ENCODE measurements at regions of chr5 and their contacts with region 1.

Region 1: GRCh38 chr5:1385395-1386273 is 40.7 kb upstream of the CLPTM1L start:
- DNase-seq: peak; percentile 75 to 82 (median 76)
- H3K4me3 ChIP-seq: peak overlapping the region; percentile 69 to 70
- H3K4me3 Mint-ChIP-seq: peak overlapping the region; percentile 98 to 100 (median 99)
- H3K27ac ChIP-seq: peak overlapping the region; percentile 83
- H3K27ac Mint-ChIP-seq: peak overlapping the region; percentile 94 to 100 (median 100)
- H3K4me1 ChIP-seq: peaks cover 25% of the 10 kb centered on the region
- H3K4me1 Mint-ChIP-seq: peaks cover 20 to 39% (median 27%) of the 10 kb centered on the region in 4 donors
- H3K27me3 ChIP-seq: no peaks in the 10 kb centered on the region
- H3K27me3 Mint-ChIP-seq: no peaks in the 10 kb centered on the region

Region 2: GRCh38 chr5:1294835-1295649 is 90.6 kb before region 1 on chr5 and contains the start of gene TERT:
- CTCF ChIA-PET with region 1: no interaction called
- POLR2A ChIA-PET with region 1: interaction called, 10 read pairs
- intact Hi-C with region 1: no loop called
- DNase-seq: peak; percentile 58 to 67 (median 62)
- H3K4me3 ChIP-seq: peak within 1 kb of the TSS in 1 of 2 donors; percentile 45
- H3K4me3 Mint-ChIP-seq: peak within 1 kb of the TSS in 5 of 8 donors; percentile 33 to 66 (median 49)
- H3K27ac ChIP-seq: no peak within 1 kb of the TSS
- H3K27ac Mint-ChIP-seq: no peak within 1 kb of the TSS
- H3K4me1 ChIP-seq: peaks cover 11% of the 10 kb centered on the region
- H3K4me1 Mint-ChIP-seq: peaks cover 0 to 6% (median 0%) of the 10 kb centered on the region in 4 donors
- H3K27me3 ChIP-seq: no peaks in the 10 kb centered on the region
- H3K27me3 Mint-ChIP-seq: no peaks in the 10 kb centered on the region
- total RNA-seq, gene TERT: not detected

Region 3: DNA sequence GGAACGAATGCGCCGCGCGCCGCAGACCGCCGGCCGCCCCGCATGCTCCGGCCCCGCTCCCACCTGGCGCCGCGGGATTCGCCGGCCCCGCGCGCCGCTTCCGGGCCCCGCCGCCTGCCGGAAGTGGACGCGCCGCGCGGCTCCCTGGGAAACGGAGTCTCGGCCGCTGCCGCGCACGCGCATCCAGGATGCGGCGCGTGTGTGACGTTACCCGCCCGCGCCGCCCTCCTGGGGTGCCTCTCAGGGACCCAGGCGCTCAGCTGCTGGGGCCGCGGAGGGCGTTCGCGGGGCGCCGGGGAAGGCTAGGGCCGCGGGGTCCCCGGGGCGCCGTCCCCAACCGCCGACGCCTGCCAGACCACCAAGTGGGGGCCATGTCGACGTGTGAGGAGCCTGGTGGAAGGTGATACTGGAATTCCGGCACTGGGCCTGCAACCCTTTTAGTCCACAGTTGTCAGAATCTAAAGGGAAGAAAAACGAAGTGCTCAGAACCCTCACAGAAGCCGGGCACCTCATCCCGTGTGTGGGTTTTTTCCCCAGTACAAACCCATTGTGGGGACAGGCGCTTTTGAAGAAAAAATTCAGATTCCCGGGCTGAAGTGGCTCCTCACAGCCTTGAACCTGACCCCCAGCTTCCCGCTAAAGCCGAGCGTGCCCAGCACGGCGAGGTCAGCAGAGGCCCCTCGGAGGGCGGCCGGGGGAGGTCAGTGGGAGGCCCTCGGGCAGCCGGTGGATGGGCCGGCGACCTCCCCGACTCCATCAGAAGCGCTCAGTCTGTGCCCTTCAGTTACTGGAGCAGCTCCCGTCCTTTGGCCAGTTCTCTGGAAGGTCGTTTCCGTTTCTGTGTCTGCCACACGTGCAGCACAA is 40.4 kb before region 1 on chr5 and contains the start of gene CLPTM1L:
- CTCF ChIA-PET with region 1: interaction called, 3 read pairs
- POLR2A ChIA-PET with region 1: interaction called, 53 read pairs
- intact Hi-C with region 1: loop called (anchors 1 kb)
- DNase-seq: peak; percentile 83 to 91 (median 90)
- H3K4me3 ChIP-seq: peak within 1 kb of the TSS; percentile 86 to 96
- H3K4me3 Mint-ChIP-seq: peak within 1 kb of the TSS; percentile 88 to 95 (median 92)
- H3K27ac ChIP-seq: peak within 1 kb of the TSS; percentile 75
- H3K27ac Mint-ChIP-seq: peak within 1 kb of the TSS; percentile 82 to 98 (median 88)
- H3K4me1 ChIP-seq: peaks cover 25% of the 10 kb centered on the region
- H3K4me1 Mint-ChIP-seq: peaks cover 18 to 48% (median 35%) of the 10 kb centered on the region in 4 donors
- H3K27me3 ChIP-seq: no peaks in the 10 kb centered on the region
- H3K27me3 Mint-ChIP-seq: no peaks in the 10 kb centered on the region
- total RNA-seq, gene CLPTM1L: 86.0 to 87.4 TPM

Region 4: GRCh38 chr5:1400211-1400855 is 14.7 kb after region 1 on chr5:
- CTCF ChIA-PET with region 1: no interaction called
- POLR2A ChIA-PET with region 1: interaction called, 12 read pairs
- intact Hi-C with region 1: no loop called
- DNase-seq: no peak
- H3K4me3 ChIP-seq: no peak overlapping the region
- H3K4me3 Mint-ChIP-seq: no peak overlapping the region
- H3K27ac ChIP-seq: no peak overlapping the region
- H3K27ac Mint-ChIP-seq: no peak overlapping the region
- H3K4me1 ChIP-seq: no peaks in the 10 kb centered on the region
- H3K4me1 Mint-ChIP-seq: no peaks in the 10 kb centered on the region
- H3K27me3 ChIP-seq: no peaks in the 10 kb centered on the region
- H3K27me3 Mint-ChIP-seq: peaks cover 9 to 20% of the 10 kb centered on the region in 2 donors

Region 5: DNA sequence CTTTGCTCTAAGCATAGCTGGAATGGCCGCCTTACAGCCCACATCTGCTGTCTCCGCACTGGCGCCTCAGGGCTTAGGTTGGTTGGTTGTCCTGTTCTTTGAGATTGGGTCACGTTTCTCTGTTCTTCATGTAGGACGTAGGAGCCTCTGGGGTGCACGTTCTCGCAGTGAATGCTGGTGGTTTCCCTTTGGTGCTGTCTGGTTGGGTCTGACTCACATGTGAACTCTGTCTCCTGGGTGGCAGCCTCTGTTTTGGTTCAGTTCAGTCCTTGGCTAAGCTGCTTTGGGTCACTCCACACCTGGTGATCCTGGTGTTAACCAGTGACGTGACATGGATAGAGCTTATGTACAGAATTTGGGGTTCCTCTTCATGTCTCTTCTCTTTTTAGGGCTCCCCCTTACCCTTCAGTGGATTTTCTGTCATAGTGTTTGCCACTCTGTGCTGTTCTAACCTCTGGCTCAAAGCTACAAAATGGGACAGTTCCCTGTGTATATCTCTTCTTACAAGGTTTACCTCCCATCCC is 150.8 kb after region 1 on chr5:
- CTCF ChIA-PET with region 1: no interaction called
- POLR2A ChIA-PET with region 1: interaction called, 18 read pairs
- intact Hi-C with region 1: loop called (anchors 5 kb)
- DNase-seq: peak; percentile 67 to 89 (median 71)
- H3K4me3 ChIP-seq: peak overlapping the region; percentile 26 to 30
- H3K4me3 Mint-ChIP-seq: peak overlapping the region; percentile 77 to 90 (median 84)
- H3K27ac ChIP-seq: peak overlapping the region; percentile 72
- H3K27ac Mint-ChIP-seq: peak overlapping the region; percentile 88 to 98 (median 92)
- H3K4me1 ChIP-seq: peaks cover 26% of the 10 kb centered on the region
- H3K4me1 Mint-ChIP-seq: peaks cover 20 to 35% (median 28%) of the 10 kb centered on the region in 4 donors
- H3K27me3 ChIP-seq: no peaks in the 10 kb centered on the region
- H3K27me3 Mint-ChIP-seq: no peaks in the 10 kb centered on the region